Motor neuron (in vitro differentiated cells): ENCODE measurements at regions of chr2 and their contacts with region 1.

Region 1: DNA sequence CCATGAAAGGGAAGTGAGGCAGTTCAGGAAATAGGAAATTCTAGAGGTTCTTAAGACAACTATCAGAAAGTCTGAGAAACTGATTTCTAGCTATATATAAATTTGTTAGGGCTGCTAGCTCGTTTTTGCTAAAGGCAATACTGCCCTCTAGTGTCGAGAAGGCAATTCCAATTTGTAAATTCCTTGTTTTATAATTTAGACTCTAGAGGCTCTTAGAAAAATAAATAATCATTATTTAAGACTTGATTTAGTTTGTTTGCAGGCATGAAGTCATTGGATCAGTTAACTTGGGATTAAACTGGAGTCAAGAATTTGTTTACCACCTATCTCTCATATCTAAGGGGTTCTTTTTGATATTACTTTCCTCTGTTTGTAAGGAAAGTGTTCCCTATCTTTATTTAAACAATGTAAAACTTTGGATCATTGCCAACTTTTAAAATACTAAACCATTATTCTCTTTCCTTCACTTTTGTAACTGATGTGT is 66.2 kb downstream of the ACVR2A start:
- ATAC-seq: peak in 3 of 8 experiments; percentile 33 to 47 (median 45)
- H3K4me3 ChIP-seq: no peak overlapping the region
- H3K27ac ChIP-seq: no peak overlapping the region
- H3K4me1 ChIP-seq: peaks cover 8 to 21% of the 10 kb centered on the region in 2 donors

Region 2: DNA sequence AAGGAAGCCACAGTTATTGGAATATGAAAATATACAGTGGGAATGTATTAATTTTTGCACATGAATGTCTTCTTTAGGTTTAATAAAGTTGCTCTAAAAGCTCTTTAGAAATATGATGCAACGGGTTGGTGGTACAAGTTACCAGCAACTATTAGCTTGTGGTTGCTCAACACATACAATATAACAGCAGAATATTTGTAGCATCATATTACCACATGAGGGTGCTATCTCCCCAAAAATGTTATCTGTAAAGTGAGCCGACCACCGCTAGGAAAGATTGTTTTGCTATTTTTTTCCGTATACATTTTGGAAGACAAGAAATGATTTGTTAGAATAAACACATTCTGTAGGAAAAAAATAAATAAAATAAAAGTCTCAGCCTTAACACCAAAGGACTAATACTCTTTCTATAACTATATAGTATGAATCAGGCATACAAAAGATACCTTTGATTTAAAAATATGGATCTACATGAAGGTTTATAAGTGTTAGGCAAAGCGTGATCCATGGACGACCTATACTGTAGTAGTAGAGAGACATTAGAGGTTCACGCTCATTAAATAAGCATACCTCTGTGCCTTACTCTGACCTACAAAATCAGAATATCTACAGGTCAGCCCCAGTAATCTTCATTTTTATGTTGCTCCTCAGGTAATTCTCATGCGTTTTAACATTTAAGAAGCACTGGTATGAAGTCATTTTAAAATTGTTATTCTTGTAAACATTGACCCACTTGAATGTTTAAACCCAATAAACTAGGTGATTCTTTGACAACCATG is 1176.8 kb before region 1 on chr2:
- in situ Hi-C with region 1: loop called in 7 of 9 experiments (anchors 10 to 25 kb)
- ATAC-seq: peak; percentile 69 to 88 (median 82)
- H3K4me3 ChIP-seq: no peak overlapping the region
- H3K27ac ChIP-seq: no peak overlapping the region
- H3K4me1 ChIP-seq: no peaks in the 10 kb centered on the region

Region 3: GRCh38 chr2:146917431-146918042 is 993.5 kb before region 1 on chr2:
- in situ Hi-C with region 1: loop called in 1 of 9 experiments (anchors 25 kb)
- ATAC-seq: peak in 5 of 8 experiments; percentile 26 to 85 (median 77)
- H3K4me3 ChIP-seq: no peak overlapping the region
- H3K27ac ChIP-seq: peak overlapping the region in 1 of 2 donors; percentile 31
- H3K4me1 ChIP-seq: peaks cover 6 to 21% of the 10 kb centered on the region in 2 donors

Region 4: DNA sequence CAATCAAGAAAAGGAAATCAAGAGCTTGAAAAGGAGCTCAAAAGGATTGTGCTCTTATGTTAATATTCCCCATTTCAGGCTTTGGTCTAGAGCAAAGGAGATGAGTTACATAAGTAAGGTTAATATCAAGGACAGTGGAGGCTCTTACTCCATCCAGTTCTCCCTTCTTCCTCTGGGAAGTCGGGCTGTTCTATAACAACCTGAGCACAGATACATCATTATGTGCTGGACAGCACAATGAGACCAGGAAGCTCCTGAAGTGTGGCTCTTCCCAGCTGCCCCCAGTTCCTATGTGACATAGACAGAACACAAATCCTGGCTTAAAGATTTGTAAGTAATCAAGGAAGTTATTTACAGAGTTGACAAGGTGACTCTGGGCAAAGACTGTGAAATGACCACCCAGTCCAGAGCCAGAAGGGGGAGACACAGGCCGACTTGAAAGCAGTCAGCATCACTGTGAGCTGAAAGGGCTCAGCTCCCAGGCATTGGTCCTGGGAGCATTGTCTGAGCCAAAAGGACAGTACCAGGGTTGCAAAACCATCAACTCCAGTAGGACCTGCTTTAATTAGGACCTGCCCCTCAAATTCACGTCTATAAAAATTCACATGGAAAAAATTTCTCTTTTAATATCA is 983.8 kb before region 1 on chr2:
- in situ Hi-C with region 1: loop called in 4 of 9 experiments (anchors 25 kb)
- ATAC-seq: peak; percentile 96 to 100 (median 98)
- H3K4me3 ChIP-seq: no peak overlapping the region
- H3K27ac ChIP-seq: no peak overlapping the region
- H3K4me1 ChIP-seq: no peaks in the 10 kb centered on the region

Region 5: DNA sequence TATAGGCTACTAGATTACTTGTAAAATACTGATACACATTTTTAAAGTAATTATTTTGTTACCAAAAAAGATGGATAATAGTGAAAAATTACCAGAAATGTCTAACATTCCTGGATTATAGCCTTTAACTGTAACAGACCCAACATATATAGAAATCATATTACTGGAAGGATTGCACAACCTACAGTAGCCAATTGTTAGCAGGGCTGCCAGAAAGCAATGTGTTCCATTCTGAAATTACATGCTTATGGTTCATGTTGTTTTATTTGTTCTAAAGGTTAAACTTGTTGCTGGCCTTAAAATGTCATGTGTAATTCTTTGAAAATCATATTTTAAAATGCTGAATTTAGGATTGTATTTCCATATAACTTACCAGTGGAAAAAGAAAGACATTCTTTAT is 859.8 kb before region 1 on chr2:
- in situ Hi-C with region 1: loop called in 2 of 9 experiments (anchors 25 kb)
- ATAC-seq: peak in 2 of 8 experiments; percentile 32 to 76
- H3K4me3 ChIP-seq: no peak overlapping the region
- H3K27ac ChIP-seq: no peak overlapping the region
- H3K4me1 ChIP-seq: peaks cover 0 to 4% of the 10 kb centered on the region in 2 donors

Region 6: DNA sequence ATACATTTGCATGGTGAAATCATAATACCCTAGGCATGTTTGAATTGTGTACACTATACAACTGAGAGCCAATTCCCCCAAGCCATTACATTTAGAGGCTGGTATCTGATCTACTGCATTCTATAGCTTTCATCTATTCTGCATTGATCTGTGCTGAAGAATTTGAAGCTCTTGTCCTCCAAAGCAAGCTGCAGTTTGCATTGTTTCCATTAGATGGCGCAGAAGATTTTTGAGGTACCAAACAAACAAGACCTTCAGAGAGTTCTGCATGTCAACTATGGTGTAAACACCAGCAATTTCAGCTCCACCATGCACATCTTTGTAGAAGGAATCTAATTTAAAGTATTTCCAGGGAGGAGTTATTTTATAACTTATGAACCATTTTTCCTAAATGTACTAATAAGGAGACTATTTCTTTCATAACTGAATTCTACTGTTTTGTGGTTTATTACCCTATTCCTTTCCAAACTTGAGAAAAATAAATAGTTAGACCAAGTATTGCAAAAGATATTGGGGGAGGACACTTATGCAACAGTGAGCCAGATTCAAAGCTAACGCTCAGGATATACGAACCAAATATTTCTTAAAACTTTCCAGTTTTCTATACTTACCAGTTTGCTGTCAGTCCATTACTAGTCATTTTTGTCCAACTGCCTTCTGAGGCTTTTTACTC is 828.0 kb before region 1 on chr2:
- in situ Hi-C with region 1: loop called in 4 of 9 experiments (anchors 25 kb)
- ATAC-seq: peak in 7 of 8 experiments; percentile 44 to 82 (median 73)
- H3K4me3 ChIP-seq: no peak overlapping the region
- H3K27ac ChIP-seq: no peak overlapping the region
- H3K4me1 ChIP-seq: no peaks in the 10 kb centered on the region